Esophagus muscularis mucosa (tissue), 4 donors: ENCODE measurements at regions of chr3 and their contacts with region 1.

Region 1: DNA sequence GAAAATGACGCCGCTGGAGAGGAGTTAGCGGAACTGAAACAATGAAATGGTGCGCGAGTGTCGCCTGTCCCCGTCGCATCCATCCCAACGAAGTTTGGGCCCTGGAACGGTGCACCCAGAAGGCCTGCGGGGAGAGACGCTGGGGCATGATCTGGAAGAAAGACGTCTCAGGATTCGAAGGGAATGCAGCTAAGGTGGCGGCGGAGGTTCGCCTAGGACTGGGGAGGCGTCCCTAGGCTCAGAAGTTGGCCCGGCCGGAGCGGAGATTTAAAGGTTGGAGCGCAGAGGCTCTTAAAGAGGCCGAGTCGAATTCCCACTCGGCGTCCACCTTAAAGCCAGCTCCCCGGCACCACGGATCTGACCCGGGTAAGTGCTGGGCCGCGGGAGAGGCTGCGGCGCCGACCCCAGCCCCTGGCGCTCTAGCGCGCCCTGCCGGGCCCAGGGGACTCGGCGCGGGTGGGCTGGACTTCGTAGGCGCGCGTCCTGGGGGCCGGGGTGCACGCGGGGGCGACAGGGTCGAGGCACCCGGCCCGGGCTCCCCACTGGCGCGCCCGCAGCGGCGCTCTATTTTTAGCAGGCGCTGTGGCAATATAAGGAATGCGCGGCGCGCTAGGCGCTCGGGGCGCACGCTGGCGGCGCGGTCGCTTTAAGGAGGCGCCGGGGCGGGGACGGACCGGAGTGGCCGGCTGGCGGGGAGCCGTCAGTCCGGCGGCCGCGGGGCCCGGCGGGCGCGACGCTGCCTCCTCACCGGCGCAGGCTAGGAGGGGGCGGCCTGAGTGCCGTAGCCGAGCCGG is at the start of gene MRAS:
- DNase-seq: no peak
- H3K4me3 ChIP-seq: peak within 1 kb of the TSS; percentile 75 to 97 (median 88)
- H3K27ac ChIP-seq: peak within 1 kb of the TSS; percentile 91 to 96 (median 94)
- H3K4me1 ChIP-seq: peaks cover 9 to 40% (median 36%) of the 10 kb centered on the region in 4 donors
- H3K27me3 ChIP-seq: no peaks in the 10 kb centered on the region
- CTCF ChIP-seq: peak; percentile 29 to 46 (median 39)
- EP300 ChIP-seq: no peak
- POLR2A ChIP-seq: peak; percentile 7
- total RNA-seq, gene MRAS: 35.6 to 59.2 (median 45.8) TPM

Region 2: GRCh38 chr3:138389841-138390586 is 41.9 kb after region 1 on chr3:
- intact Hi-C with region 1: loop called (anchors 5 kb)
- DNase-seq: no peak
- H3K4me3 ChIP-seq: no peak overlapping the region
- H3K27ac ChIP-seq: peak overlapping the region; percentile 60 to 76 (median 68)
- H3K4me1 ChIP-seq: peaks cover 16 to 41% (median 19%) of the 10 kb centered on the region in 4 donors
- H3K27me3 ChIP-seq: no peaks in the 10 kb centered on the region
- CTCF ChIP-seq: no peak
- EP300 ChIP-seq: no peak
- POLR2A ChIP-seq: no peak

Region 3: GRCh38 chr3:139343895-139344856 is 996.0 kb after region 1 on chr3 and contains the start of gene MRPS22:
- intact Hi-C with region 1: no loop called
- DNase-seq: no peak
- H3K4me3 ChIP-seq: peak within 1 kb of the TSS; percentile 68 to 95 (median 86)
- H3K27ac ChIP-seq: peak within 1 kb of the TSS; percentile 75 to 81 (median 80)
- H3K4me1 ChIP-seq: peaks cover 15 to 29% (median 25%) of the 10 kb centered on the region in 4 donors
- H3K27me3 ChIP-seq: peaks cover 0 to 7% (median 0%) of the 10 kb centered on the region in 4 donors
- CTCF ChIP-seq: no peak
- EP300 ChIP-seq: no peak
- POLR2A ChIP-seq: no peak
- total RNA-seq, gene MRPS22: 37.0 to 50.9 (median 45.8) TPM

Region 4: GRCh38 chr3:139732729-139733128 is 1384.6 kb after region 1 on chr3:
- intact Hi-C with region 1: no loop called
- DNase-seq: peak; percentile 77
- H3K4me3 ChIP-seq: no peak overlapping the region
- H3K27ac ChIP-seq: no peak overlapping the region
- H3K4me1 ChIP-seq: no peaks in the 10 kb centered on the region
- H3K27me3 ChIP-seq: peaks cover 0 to 5% (median 0%) of the 10 kb centered on the region in 4 donors
- CTCF ChIP-seq: no peak
- EP300 ChIP-seq: no peak
- POLR2A ChIP-seq: no peak